ENCODE measurements at regions of chr17 and their contacts with region 1.

Region 1: DNA sequence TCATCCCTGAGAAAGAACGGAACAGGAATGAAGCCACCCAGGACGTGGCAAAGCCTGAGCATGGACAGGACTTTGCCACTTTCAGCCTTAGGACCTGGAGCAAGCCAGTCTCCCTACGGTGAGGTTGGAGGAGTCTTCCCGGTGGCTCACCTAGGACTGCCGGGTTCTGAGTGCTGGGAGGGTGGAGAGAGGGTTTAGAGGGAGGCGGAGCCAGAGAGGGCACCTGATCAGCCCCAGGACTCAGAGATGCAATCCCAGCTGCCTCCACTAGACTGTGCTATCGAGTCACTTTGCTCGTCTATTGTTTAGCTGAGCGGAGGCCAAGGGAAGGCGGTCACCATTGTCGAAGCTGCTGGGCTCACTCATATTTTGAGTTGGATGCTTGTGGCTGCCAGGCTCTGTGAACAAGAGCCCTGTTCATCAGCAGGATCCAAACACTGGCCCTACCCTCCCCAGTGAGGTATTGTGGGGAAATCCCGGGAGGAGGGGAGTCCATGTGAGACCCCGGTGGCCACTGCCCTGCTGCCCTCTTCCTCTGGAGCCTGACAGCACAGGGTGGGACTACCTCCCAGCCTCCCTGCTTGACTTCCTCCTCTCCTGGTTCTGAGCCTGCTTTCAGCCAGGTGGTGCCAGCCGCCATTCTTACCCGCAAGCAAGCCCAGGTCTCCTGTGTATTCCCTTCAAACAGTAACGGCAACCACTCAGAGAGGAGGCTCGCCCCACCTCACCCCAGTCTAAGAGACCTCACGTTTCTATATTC is 7.0 kb downstream of the KRT14 start:
- DNase-seq: peak; percentile 87
- ATAC-seq: peak; percentile 81
- H3K4me3 ChIP-seq: no peak overlapping the region
- H3K27ac ChIP-seq: peak overlapping the region; percentile 6; the same call in 1 of the 2 replicates
- H3K4me1 ChIP-seq: peaks cover 29% of the 10 kb centered on the region
- H3K27me3 ChIP-seq: no peaks in the 10 kb centered on the region
- CTCF ChIP-seq: peak; percentile 65

Region 2: DNA sequence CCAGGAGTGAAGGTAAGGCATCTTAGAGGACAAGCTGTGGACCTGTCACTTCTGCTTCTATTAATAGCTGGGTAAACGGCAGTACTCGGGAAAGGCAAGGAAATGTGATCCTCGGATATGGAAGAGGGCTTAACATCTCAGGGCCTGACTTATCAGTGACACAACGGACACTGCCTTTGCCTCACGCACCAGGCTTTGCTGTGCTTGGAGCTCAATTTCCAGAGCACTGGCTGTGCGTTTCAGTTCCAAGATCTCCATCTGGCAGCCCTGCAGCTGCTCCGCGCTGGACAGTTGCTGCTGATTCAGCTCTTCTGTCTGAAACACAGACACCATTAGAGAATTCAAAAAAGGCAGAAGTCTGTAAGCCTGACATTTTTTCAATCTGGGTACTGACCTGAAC is 599.1 kb before region 1 on chr17:
- CTCF ChIA-PET with region 1: no interaction called
- POLR2A ChIA-PET with region 1: no interaction called
- intact Hi-C with region 1: no loop called
- DNase-seq: no peak
- ATAC-seq: no peak
- H3K4me3 ChIP-seq: no peak overlapping the region
- H3K27ac ChIP-seq: no peak overlapping the region
- H3K4me1 ChIP-seq: peaks cover 6% of the 10 kb centered on the region; the same call in 1 of the 2 replicates
- H3K27me3 ChIP-seq: no peaks in the 10 kb centered on the region
- CTCF ChIP-seq: no peak

Region 3: GRCh38 chr17:41593311-41593981 is 13.8 kb after region 1 on chr17:
- CTCF ChIA-PET with region 1: no interaction called
- POLR2A ChIA-PET with region 1: no interaction called
- intact Hi-C with region 1: no loop called
- DNase-seq: no peak
- ATAC-seq: no peak
- H3K4me3 ChIP-seq: no peak overlapping the region
- H3K27ac ChIP-seq: no peak overlapping the region
- H3K4me1 ChIP-seq: no peaks in the 10 kb centered on the region
- H3K27me3 ChIP-seq: no peaks in the 10 kb centered on the region
- CTCF ChIP-seq: no peak

Region 4: GRCh38 chr17:41655611-41656351 is 76.1 kb after region 1 on chr17:
- CTCF ChIA-PET with region 1: interaction called, 19 read pairs
- POLR2A ChIA-PET with region 1: no interaction called
- intact Hi-C with region 1: no loop called
- DNase-seq: peak; percentile 50
- ATAC-seq: peak; percentile 22; the same call in 1 of the 2 replicates
- H3K4me3 ChIP-seq: no peak overlapping the region
- H3K27ac ChIP-seq: peak overlapping the region; percentile 95
- H3K4me1 ChIP-seq: peaks cover 29% of the 10 kb centered on the region
- H3K27me3 ChIP-seq: no peaks in the 10 kb centered on the region
- CTCF ChIP-seq: no peak